GM10248 (cell line): ENCODE measurements at regions of chr4 and their contacts with region 1.

Region 1: GRCh38 chr4:25938787-25939186 is 24.8 kb downstream of the SMIM20 start:
- DNase-seq: peak; percentile 65
- CTCF ChIP-seq: no peak

Region 2: GRCh38 chr4:25884031-25884782 is 54.6 kb before region 1 on chr4:
- CTCF ChIA-PET with region 1: no interaction called
- POLR2A ChIA-PET with region 1: no interaction called
- DNase-seq: no peak
- CTCF ChIP-seq: no peak

Region 3: GRCh38 chr4:25925486-25926201 is 13.1 kb before region 1 on chr4:
- CTCF ChIA-PET with region 1: interaction called, 19 read pairs
- POLR2A ChIA-PET with region 1: no interaction called
- DNase-seq: peak; percentile 58
- CTCF ChIP-seq: peak; percentile 51

Region 4: DNA sequence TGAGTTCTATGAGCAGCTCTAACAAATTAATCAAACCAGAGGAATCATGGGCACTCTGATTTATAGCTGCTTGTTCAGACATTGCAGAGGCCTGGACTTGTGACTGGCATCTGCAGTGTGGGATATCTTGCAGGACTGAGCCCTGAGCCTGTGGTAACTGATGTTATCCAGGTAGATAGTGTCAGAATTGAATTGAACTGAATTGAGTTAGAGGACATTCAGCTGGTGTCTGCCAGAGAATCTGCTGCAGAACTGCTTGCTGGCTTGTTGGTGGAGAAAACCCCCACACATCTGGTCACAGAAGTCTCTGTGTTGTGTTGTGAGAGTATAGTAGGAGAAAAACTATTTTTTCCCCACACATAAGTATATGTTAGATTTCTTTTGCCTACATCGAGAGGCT is 17.5 kb after region 1 on chr4:
- CTCF ChIA-PET with region 1: interaction called, 10 read pairs
- POLR2A ChIA-PET with region 1: interaction called, 3 read pairs
- DNase-seq: no peak
- CTCF ChIP-seq: no peak